HCT116 (cell line): ENCODE measurements at regions of chr2 and their contacts with region 1.

Region 1: DNA sequence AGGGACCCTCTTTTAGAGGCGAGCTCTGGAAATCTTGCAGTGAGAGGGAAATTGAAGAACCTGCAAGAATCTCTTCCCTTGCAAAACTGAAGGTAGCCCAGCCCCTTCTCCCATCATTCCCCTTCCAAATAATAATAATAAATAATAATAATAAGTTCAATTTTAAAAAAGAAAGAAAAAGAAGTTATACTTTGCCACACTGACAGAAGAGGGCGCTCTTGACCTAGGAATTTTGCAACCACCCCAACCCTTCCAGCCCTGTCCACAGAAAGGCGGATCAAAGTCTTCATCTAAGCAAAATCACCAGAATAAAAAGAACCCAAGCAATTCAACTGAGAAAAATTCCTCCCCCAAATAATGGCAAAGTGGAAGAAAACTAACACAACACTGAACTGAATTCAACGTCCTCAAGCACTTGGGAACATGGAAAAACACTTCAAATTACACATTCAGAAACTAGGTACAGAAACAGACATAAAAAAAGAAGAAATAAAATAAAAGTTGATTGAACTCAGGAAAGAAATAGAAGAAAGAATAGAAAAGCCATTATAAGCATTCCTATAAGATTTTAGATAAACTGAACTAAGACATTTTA is 98.9 kb upstream of the GLS start:
- DNase-seq: peak; percentile 53
- ATAC-seq: peak; percentile 89
- H3K4me3 ChIP-seq: no peak overlapping the region
- H3K27ac ChIP-seq: no peak overlapping the region
- H3K4me1 ChIP-seq: no peaks in the 10 kb centered on the region
- H3K27me3 ChIP-seq: no peaks in the 10 kb centered on the region
- CTCF ChIP-seq: peak; percentile 48 to 78 (median 49)
- POLR2A ChIP-seq: no peak
- RAD21 ChIP-seq: peak; percentile 85

Region 2: DNA sequence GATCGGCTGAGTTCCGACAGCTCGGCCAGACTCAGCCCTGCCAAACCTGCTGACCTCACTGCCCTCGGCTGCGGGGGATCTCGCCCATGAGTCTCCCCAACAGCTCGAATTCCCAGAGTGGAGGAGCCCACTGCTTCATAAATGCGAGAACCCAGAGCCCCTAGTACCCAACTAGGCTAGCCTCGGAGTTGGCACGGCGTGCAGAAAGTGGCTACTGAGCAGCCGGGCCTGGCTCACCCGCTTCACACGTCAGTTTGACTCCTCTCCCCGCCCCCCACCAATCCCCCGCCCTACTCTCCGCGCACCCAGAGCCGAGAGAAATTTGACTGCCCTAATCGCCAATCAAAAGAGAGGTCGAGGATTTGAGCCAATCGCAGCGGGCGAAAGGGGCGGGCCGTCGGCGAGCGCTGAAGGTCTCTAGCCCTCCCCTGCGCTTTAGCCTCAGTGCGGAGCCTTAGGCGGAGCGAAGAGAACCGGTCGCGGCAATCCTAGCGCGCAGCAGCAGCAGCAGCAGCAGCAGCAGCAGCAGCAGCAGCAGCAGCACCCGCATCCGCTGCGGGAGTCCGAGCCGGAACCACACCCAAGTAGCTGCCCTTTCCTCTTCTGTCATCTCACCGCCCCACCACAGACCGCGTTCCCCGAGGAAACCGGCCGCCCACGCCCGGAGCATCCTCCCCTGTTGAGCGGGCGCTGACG is 98.8 kb after region 1 on chr2 and contains the start of gene GLS:
- CTCF ChIA-PET with region 1: no interaction called
- POLR2A ChIA-PET with region 1: no interaction called
- RAD21 ChIA-PET with region 1: no interaction called
- intact Hi-C with region 1: loop called (anchors 10 kb)
- DNase-seq: peak; percentile 95
- ATAC-seq: peak; percentile 90
- H3K4me3 ChIP-seq: peak within 1 kb of the TSS; percentile 77 to 79
- H3K27ac ChIP-seq: peak within 1 kb of the TSS; percentile 86
- H3K4me1 ChIP-seq: peaks cover 17 to 21% of the 10 kb centered on the region in 2 experiments
- H3K27me3 ChIP-seq: no peaks in the 10 kb centered on the region
- CTCF ChIP-seq: no peak
- POLR2A ChIP-seq: peak; percentile 97
- RAD21 ChIP-seq: no peak
- total RNA-seq, gene GLS: 97.4 TPM

Region 3: DNA sequence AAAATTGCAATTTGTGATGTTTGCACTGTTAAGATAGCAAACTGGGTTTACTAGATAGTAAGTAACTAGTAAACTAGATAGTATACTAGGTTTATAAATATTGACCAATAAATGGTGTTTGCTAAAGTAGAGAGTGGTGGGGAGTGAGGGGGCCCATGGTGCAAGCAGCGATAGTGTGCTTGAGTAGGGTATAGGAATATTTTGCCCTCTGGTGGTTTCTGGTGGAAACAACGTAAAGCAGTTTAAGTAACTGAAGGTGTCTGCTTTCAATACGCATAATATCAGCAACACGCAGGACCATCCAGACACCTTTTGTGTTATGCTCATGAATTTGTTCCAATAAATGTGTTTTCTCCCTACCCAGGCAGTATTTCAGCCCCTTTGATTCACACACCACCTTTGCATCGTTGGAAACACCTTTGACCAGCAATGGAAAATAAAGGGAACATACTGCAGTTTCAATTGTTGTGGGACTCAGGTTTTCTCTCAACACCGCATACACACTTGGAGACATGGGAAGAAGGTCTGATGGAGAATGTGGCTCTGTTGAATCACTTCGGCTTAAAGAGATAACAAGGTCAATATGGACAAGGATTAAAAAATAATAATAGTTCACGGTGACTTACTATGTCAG is 248.9 kb after region 1 on chr2:
- CTCF ChIA-PET with region 1: no interaction called
- POLR2A ChIA-PET with region 1: no interaction called
- RAD21 ChIA-PET with region 1: no interaction called
- intact Hi-C with region 1: loop called (anchors 2 kb)
- DNase-seq: no peak
- ATAC-seq: peak; percentile 96
- H3K4me3 ChIP-seq: no peak overlapping the region
- H3K27ac ChIP-seq: no peak overlapping the region
- H3K4me1 ChIP-seq: peaks cover 0 to 9% of the 10 kb centered on the region in 2 experiments; a peak in 1 of 4 replicates
- H3K27me3 ChIP-seq: no peaks in the 10 kb centered on the region
- CTCF ChIP-seq: peak; percentile 61 to 76 (median 75)
- POLR2A ChIP-seq: no peak
- RAD21 ChIP-seq: peak; percentile 76

Region 4: DNA sequence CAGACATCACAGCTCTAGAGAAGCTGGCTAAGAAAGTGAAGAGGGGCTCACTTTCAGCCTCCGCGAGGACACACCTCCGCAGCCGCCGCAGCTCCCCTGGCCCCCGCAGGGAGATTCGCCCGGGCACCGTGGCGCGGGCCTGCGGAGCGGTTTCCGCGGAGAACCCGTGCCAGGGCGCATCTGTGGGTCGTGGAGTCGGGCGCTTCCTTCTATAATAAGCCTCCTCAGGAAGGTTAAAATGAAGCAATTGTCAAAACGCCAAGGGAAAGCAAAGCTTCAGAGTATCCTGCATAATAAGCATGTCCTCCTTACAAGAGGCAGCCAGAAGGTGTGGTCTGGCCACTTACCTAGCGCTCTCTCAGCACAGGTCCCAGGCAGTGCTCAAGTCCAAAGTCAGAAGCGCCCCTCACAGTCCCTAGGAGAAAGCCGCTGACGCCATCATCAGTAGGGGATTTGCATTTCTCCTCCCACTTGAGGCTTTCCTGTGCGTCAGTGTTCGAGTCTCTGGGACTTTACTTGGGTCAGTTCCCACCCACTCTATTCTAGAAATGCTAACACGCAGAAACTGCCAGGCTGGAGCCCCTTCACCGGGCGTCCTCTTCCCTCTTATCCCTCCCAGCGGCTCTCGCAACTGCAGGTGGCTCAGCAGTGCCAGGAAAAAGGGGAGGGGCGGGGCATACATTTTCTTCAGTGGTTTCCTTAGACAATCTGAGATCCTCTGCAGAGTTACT is 369.1 kb after region 1 on chr2 and contains the start of gene STAT4:
- CTCF ChIA-PET with region 1: interaction called, 8 read pairs
- POLR2A ChIA-PET with region 1: no interaction called
- RAD21 ChIA-PET with region 1: no interaction called
- intact Hi-C with region 1: loop called (anchors 2 kb)
- DNase-seq: peak; percentile 57
- ATAC-seq: peak; percentile 89
- H3K4me3 ChIP-seq: peak within 1 kb of the TSS; percentile 63 to 70
- H3K27ac ChIP-seq: peak within 1 kb of the TSS; percentile 1
- H3K4me1 ChIP-seq: peaks cover 0 to 9% of the 10 kb centered on the region in 2 experiments; a peak in 2 of 4 replicates
- H3K27me3 ChIP-seq: no peaks in the 10 kb centered on the region
- CTCF ChIP-seq: no peak
- POLR2A ChIP-seq: no peak
- RAD21 ChIP-seq: no peak
- total RNA-seq, gene STAT4: 2.0 TPM

Region 5: GRCh38 chr2:191521608-191522208 is 740.0 kb after region 1 on chr2:
- CTCF ChIA-PET with region 1: no interaction called
- POLR2A ChIA-PET with region 1: no interaction called
- RAD21 ChIA-PET with region 1: no interaction called
- intact Hi-C with region 1: loop called (anchors 10 kb)
- DNase-seq: peak; percentile 26
- ATAC-seq: no peak
- H3K4me3 ChIP-seq: no peak overlapping the region
- H3K27ac ChIP-seq: no peak overlapping the region
- H3K4me1 ChIP-seq: no peaks in the 10 kb centered on the region
- H3K27me3 ChIP-seq: no peaks in the 10 kb centered on the region
- CTCF ChIP-seq: peak; percentile 64 to 84 (median 79)
- POLR2A ChIP-seq: no peak
- RAD21 ChIP-seq: peak; percentile 87